ENCODE measurements at regions of chr10 and their contacts with region 1.

Region 1: GRCh38 chr10:30671026-30671616 is 41.6 kb upstream of the LYZL2 start:
- DNase-seq: peak; percentile 65
- ATAC-seq: peak; percentile 93
- H3K4me3 ChIP-seq: peak overlapping the region; percentile 18 to 40; a peak in 3 of 4 replicates
- H3K27ac ChIP-seq: no peak overlapping the region
- H3K4me1 ChIP-seq: no peaks in the 10 kb centered on the region
- H3K27me3 ChIP-seq: no peaks in the 10 kb centered on the region
- CTCF ChIP-seq: peak; percentile 56 to 72 (median 68); a peak in 5 of 6 replicates
- POLR2A ChIP-seq: no peak
- RAD21 ChIP-seq: peak; percentile 73

Region 2: GRCh38 chr10:30639946-30640786 is 31.0 kb before region 1 on chr10:
- CTCF ChIA-PET with region 1: interaction called, 12 read pairs
- POLR2A ChIA-PET with region 1: no interaction called
- RAD21 ChIA-PET with region 1: no interaction called
- intact Hi-C with region 1: no loop called
- DNase-seq: peak; percentile 61
- ATAC-seq: peak; percentile 40; the same call in 1 of the 2 replicates
- H3K4me3 ChIP-seq: no peak overlapping the region
- H3K27ac ChIP-seq: no peak overlapping the region
- H3K4me1 ChIP-seq: peaks cover 0 to 12% of the 10 kb centered on the region in 2 experiments; a peak in 3 of 4 replicates
- H3K27me3 ChIP-seq: no peaks in the 10 kb centered on the region
- CTCF ChIP-seq: peak; percentile 59 to 84 (median 81); a peak in 5 of 6 replicates
- POLR2A ChIP-seq: no peak
- RAD21 ChIP-seq: peak; percentile 57

Region 3: DNA sequence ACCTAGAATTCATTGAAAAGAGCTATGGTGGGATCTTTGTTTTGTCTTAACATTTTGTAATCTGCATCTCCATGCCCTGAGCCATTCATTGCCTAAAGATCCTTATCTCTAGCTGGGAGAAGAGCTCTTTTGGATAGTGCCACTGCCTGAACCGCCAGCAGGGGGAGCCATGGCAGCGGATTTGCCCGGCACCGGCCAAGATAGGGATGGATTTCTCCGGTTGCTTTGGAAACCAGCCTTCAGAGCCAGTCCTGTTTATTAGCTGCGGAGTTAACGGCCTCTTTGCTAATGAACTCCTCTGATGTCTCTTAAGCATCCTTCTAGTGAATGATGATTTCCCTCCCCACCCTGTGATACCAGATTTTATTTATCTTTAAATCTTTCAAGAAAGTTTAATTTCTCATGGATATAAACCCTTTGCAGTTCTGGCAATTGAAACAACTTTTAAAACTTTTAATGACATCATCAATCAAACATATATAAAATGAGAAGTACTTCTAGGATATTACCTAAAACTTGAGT is 16.6 kb after region 1 on chr10:
- CTCF ChIA-PET with region 1: interaction called, 14 read pairs
- POLR2A ChIA-PET with region 1: no interaction called
- RAD21 ChIA-PET with region 1: interaction called in 1 of 2 experiments, 5 read pairs
- intact Hi-C with region 1: no loop called
- DNase-seq: peak; percentile 54
- ATAC-seq: peak; percentile 99
- H3K4me3 ChIP-seq: no peak overlapping the region
- H3K27ac ChIP-seq: no peak overlapping the region
- H3K4me1 ChIP-seq: peaks cover 1 to 11% of the 10 kb centered on the region in 2 experiments
- H3K27me3 ChIP-seq: peaks cover 9% of the 10 kb centered on the region
- CTCF ChIP-seq: peak; percentile 71 to 98 (median 98); a peak in 5 of 6 replicates
- POLR2A ChIP-seq: no peak
- RAD21 ChIP-seq: peak; percentile 85

Measured in HCT116 (cell line).